Head of caudate nucleus (tissue), 42 donors: ENCODE measurements at regions of chr18 and their contacts with region 1.

Region 1: GRCh38 chr18:31555971-31556747 is 35.5 kb upstream of the TTR start:
- DNase-seq: peak in 25 of 42 donors; percentile 18 to 81 (median 58)

Region 2: DNA sequence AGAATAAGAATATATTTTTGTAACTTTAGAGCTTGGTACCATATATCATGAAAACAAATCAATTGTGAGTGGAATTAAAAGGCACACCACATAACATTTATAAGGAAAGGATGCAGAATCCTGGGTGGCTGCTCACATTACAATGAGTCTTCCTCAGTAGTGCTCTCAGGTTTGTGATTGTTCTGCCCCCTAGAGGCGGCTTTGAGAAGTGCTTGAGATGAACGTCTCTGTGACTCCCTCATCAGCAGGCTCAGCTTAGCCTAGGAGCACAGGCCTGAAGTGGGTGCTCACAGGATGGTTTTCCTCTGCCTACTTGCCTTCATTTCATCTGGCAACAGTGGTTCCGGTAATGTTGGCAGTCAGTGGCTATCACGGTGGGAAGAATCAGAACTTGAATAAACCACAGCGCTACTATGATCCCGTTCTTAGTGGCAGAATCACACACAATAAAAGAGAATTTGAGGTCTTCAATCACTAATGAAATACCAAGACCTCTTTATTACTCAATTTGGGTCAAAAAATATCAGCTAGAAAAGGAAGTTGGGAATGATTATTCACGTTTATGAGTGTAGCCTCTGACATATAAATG is 166.3 kb after region 1 on chr18:
- intact Hi-C with region 1: loop called (anchors 2 kb)
- DNase-seq: peak; percentile 30 to 94 (median 86)

Region 3: DNA sequence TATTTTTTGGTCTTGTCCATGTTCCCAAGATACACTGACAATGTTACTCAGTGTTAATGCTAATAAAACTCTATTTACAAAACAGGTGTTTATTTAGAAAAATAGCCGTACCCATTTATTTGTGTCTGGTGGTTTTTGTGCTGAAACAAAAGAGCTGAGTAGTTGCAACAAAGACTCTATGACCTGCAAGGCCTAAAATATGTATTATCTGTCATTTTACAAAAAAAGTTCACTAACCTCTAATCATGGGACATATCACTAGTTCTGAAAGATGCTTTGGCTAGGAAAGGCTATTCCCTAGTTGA is 263.7 kb after region 1 on chr18:
- intact Hi-C with region 1: loop called (anchors 10 kb)
- DNase-seq: no peak

Region 4: DNA sequence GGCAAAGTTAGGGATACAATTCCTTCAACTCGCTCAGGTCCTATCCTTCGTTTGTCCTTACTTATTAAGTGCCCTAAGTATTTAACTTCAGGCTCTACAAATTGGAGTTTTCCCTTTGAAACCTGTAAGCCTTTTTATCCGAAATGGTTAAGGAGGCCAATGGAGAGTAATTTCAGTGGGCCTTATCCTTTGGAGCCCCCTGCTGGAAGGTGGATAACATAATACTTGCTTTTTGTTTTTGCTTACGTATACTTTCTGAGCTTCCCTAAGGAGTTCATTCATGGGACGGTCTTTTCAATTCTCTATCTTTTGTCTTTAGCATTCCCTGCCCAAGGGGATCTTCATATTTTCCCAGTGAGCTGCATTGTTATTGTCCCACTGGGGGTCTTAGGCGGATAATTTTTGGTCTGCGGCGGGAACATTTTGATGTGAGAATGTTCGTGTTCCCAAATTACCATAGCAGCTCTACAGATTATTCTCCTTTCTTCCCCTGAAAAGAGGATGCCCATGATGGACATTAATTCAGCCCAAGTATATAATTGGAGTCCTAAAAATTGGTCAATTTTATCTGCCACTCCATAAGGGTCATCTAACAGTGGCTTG is 421.2 kb after region 1 on chr18:
- intact Hi-C with region 1: loop called (anchors 10 kb)
- DNase-seq: peak in 35 of 42 donors; percentile 22 to 86 (median 63)